Heart left ventricle (tissue), 16 donors: ENCODE measurements at regions of chr10 and their contacts with region 1.

Region 1: DNA sequence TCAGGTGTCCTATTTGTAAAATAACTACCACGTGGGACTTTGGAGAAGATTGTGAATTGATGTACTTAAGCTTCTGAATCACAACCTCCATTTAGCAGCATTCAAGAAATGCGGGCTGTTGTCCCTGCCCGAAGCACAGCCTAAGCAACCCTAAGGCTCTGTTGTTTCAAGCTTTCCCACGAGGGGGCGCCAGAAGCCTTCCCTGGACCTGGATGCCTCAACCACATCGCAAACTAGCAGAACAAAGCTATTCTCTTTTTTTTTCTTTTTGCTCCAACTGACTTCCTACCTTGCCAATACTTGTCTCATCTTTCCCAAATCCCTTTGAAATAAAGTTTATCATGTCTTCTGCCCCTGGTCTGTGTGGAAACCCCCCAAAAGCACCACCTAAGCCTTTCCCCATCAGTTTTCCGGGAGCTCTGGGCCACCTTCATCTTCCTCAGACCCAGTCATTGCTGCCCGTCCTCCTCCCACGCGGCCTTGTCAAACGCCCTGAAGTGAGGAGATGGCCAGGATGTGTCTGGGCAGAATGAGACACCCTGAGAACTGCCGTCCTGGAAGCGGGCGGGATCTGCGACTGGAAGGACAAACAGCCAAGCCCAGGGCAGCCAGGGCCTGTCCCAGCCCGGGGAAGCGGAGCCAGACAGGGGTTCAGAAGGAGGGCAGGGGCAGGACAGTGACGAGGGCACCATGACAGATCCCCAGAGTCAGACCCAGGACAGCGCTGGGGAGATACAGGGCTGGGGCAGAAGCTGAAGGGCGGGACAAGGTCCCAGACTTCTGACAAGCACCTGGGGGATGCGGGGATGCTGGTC is 112.7 kb downstream of the SLIT1 start:
- DNase-seq: peak; percentile 70 to 86 (median 76)
- ATAC-seq: peak; percentile 54 to 87 (median 76)
- H3K4me3 ChIP-seq: no peak overlapping the region
- H3K27ac ChIP-seq: no peak overlapping the region
- H3K4me1 ChIP-seq: no peaks in the 10 kb centered on the region
- H3K27me3 ChIP-seq: peaks cover 0 to 19% (median 5%) of the 10 kb centered on the region in 9 donors
- CTCF ChIP-seq: peak; percentile 88 to 99 (median 92)
- POLR2A ChIP-seq: no peak

Region 2: DNA sequence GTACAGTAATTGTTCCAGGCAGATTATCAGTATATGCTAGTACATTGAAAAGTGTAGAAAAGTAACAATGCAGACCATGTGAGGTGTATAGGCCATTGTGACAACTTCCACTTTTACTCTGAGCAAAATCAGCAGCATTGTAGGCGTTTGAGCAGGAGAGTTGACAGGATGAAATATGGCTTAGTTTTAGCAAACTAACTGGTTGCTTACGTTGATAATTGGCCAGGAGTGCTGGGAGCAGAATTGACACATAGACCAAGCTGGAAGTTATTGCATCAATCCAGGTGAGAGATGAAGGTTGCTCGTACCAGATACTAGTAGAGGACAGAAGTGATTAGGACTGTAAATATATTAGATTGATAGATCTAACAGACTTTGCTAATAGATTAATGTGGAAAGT is 195.0 kb before region 1 on chr10:
- intact Hi-C with region 1: no loop called
- DNase-seq: no peak
- ATAC-seq: no peak
- H3K4me3 ChIP-seq: no peak overlapping the region
- H3K27ac ChIP-seq: no peak overlapping the region
- H3K4me1 ChIP-seq: peaks cover 0 to 53% (median 8%) of the 10 kb centered on the region in 12 donors
- H3K27me3 ChIP-seq: no peaks in the 10 kb centered on the region
- CTCF ChIP-seq: no peak
- POLR2A ChIP-seq: no peak

Region 3: DNA sequence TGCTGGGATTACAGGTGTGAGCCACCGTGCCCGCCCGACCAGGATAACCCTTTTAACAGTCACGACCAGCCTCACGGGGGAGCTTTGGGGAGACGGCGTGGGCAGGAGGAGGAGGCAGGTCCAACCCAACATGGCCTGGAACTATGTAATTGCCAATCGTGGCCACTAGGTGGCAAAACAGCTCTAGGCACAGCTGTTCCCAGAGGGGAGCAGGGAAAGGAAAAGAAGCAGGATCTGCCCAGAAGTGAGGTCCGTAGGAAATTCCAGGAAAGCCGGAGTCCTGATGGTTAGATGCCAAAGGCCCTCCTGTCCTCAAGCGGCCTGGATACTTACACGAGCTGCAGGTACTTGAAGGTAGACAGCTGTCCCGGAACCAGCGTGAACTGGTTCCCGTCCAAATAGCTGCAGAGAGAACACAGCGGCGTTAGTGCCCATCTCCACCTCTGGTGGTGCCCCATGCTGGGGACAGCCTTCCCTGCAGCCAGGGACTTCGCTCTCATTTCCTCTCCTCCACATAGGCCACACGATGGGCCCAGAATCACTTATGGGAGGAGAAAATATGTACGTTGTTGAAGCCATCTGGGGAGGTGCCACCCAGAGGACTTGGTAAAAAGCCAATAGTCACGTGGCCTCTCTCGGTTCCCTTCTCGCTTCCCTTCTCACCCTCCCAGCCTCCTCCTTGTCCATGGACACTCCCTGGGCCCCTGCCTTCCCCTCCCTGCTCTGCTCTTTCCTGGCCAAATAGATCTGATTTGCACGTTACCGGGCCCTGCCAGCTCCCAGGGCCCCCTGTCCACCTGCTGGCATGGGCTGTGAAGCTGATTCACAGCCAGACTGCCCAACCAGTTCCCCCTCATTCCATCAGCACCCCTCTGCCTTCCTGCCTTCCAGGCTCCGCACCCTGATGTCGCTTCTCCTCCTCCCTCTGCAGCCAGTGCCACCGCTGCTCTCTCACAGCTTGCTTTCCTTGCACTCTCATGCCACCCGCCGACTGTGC is 35.4 kb before region 1 on chr10:
- intact Hi-C with region 1: loop called in 1 of 10 experiments (anchors 2 kb)
- DNase-seq: peak; percentile 69 to 81 (median 78)
- ATAC-seq: peak; percentile 89 to 95 (median 90)
- H3K4me3 ChIP-seq: peak overlapping the region in 11 of 12 donors; percentile 29 to 61 (median 46)
- H3K27ac ChIP-seq: peak overlapping the region in 3 of 12 donors; percentile 5 to 30 (median 6)
- H3K4me1 ChIP-seq: peaks cover 0 to 12% (median 10%) of the 10 kb centered on the region in 12 donors
- H3K27me3 ChIP-seq: no peaks in the 10 kb centered on the region
- CTCF ChIP-seq: peak; percentile 72 to 92 (median 86)
- POLR2A ChIP-seq: no peak

Region 4: GRCh38 chr10:97117372-97117771 is 44.3 kb after region 1 on chr10:
- intact Hi-C with region 1: loop called in 9 of 10 experiments (anchors 1 to 2 kb)
- DNase-seq: no peak
- ATAC-seq: peak in 2 of 4 donors; percentile 46 to 62
- H3K4me3 ChIP-seq: no peak overlapping the region
- H3K27ac ChIP-seq: no peak overlapping the region
- H3K4me1 ChIP-seq: no peaks in the 10 kb centered on the region
- H3K27me3 ChIP-seq: peaks cover 0 to 14% (median 0%) of the 10 kb centered on the region in 9 donors
- CTCF ChIP-seq: peak; percentile 19 to 62 (median 47)
- POLR2A ChIP-seq: no peak

Region 5: DNA sequence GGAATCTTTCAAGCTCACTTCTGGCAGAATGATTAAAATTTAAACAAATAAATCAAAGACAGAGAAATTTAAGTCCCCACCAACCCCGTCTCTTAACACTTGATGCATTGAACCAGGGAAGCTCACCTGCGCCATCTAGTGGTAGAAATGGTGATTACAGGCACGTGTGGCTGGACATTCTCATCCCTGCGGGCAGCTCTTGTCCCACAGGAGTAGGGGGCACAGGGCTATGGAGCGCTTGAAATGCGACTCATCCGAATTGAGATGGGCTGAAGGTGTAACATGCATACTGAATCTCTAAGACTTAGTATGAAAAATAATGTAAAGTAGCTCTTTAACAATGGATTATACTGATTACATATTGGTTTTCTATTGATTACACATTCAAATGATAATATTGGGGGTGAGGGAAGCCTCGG is 137.5 kb after region 1 on chr10:
- intact Hi-C with region 1: loop called (anchors 1 to 5 kb)
- DNase-seq: peak in 4 of 5 donors; percentile 45 to 63 (median 53)
- ATAC-seq: peak; percentile 49 to 73 (median 60)
- H3K4me3 ChIP-seq: no peak overlapping the region
- H3K27ac ChIP-seq: no peak overlapping the region
- H3K4me1 ChIP-seq: no peaks in the 10 kb centered on the region
- H3K27me3 ChIP-seq: no peaks in the 10 kb centered on the region
- CTCF ChIP-seq: peak in 11 of 12 donors; percentile 88 to 100 (median 97)
- POLR2A ChIP-seq: no peak

Region 6: DNA sequence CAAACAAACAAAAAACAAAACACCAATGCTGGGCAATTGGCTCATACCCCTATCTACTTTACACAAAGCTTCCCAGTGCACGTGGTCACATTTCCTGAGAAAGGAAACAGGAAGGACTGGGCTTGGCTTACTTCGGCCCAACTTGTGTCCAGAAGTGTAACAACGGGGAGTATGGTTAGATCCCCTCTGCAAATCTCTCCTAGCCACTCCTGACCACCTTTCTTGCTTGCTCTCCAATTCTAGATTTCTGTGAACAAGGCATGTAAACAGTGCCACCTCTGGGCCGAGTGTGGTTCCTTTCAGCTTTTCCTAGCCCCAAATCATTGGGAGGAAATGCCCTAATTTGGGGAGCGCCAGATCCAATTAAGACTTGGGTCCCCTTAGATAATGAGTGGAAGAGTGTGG is 282.5 kb after region 1 on chr10:
- intact Hi-C with region 1: loop called in 1 of 10 experiments (anchors 10 kb)
- DNase-seq: no peak
- ATAC-seq: peak in 3 of 4 donors; percentile 32 to 75 (median 65)
- H3K4me3 ChIP-seq: no peak overlapping the region
- H3K27ac ChIP-seq: peak overlapping the region in 7 of 12 donors; percentile 11 to 73 (median 33)
- H3K4me1 ChIP-seq: peaks cover 0 to 33% (median 8%) of the 10 kb centered on the region in 12 donors
- H3K27me3 ChIP-seq: no peaks in the 10 kb centered on the region
- CTCF ChIP-seq: peak in 11 of 12 donors; percentile 13 to 60 (median 45)
- POLR2A ChIP-seq: no peak